Heart left ventricle (tissue), 16 donors: ENCODE measurements at regions of chr22 and their contacts with region 1.

Region 1: GRCh38 chr22:17562906-17563870 is at the start of gene SLC25A18:
- DNase-seq: peak; percentile 55 to 84 (median 78)
- ATAC-seq: peak; percentile 86 to 92 (median 90)
- H3K4me3 ChIP-seq: peak within 1 kb of the TSS in 6 of 12 donors; percentile 9 to 38 (median 28)
- H3K27ac ChIP-seq: peak within 1 kb of the TSS; percentile 66 to 94 (median 87)
- H3K4me1 ChIP-seq: peaks cover 4 to 33% (median 24%) of the 10 kb centered on the region in 12 donors
- H3K27me3 ChIP-seq: no peaks in the 10 kb centered on the region
- CTCF ChIP-seq: peak in 4 of 12 donors; percentile 10 to 18 (median 15)
- POLR2A ChIP-seq: peak in 1 of 2 donors; percentile 49
- total RNA-seq, gene SLC25A18: 0.27 to 10.2 (median 1.7) TPM

Region 2: DNA sequence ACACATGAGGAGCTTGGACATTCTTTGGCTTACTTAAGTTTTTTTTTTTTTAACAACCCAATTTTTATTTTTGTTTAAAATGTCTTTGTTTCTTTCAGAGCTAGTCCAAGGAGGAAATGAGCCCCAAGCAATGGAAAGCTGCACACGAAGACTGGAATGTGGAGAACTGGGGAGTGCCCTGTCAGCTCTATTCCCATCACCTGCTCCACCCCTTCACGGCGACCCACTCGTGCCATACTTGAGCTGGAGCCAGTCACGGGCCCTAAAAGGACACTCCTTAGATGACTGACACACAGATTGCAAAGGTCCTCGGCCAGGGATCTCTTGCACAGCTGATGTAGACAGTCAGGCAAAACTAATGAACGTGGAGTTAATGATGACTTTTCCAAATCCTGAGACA is 10.5 kb before region 1 on chr22:
- intact Hi-C with region 1: loop called in 1 of 10 experiments (anchors 1 kb)
- DNase-seq: peak in 2 of 5 donors; percentile 62 to 65
- ATAC-seq: peak in 3 of 4 donors; percentile 56 to 67 (median 65)
- H3K4me3 ChIP-seq: no peak overlapping the region
- H3K27ac ChIP-seq: peak overlapping the region in 2 of 12 donors; percentile 7 to 28
- H3K4me1 ChIP-seq: peaks cover 0 to 5% (median 0%) of the 10 kb centered on the region in 12 donors
- H3K27me3 ChIP-seq: no peaks in the 10 kb centered on the region
- CTCF ChIP-seq: no peak
- POLR2A ChIP-seq: no peak

Region 3: DNA sequence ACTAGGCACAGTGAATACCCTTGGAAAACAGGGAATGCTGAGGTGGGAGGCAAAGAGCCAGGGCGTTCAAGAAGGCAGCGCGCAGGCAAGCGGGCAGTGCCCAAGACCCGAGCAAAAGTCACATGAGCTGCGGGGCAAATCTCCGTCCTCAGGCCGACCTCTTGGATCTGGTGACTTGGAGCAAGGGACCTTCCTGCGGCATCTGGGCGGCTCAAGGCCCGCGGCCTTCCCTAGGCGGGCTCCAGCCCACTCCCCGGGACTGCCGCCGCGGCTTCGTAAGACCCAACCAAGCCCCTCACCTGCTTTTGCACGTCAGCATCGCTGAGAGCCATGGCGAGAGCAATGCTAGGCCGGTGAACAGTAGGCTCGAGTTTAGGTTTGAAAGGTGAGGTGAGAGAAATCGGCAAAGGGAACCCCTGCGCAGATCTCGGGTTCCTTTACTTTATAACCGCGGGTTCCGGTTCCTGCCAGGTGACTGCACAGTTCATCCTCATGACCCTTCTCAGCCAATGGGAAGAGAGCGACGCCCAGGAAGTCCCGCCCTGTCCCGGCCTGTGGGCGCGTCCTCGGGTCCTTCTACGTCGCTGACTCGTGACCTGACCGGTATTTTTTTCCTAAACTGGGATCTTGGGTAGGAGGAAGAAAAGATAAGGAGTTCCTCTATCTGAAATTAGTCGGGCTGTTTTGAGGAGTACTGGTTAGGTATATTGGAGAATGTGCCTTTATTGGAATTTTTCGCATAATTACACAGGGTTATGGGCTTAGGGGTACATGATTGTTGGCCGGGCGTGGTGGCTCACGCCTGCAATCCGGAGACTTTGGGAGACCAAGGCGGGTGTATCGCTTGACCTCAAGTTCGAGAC is 65.3 kb after region 1 on chr22 and contains the start of gene ATP6V1E1:
- intact Hi-C with region 1: loop called in 2 of 10 experiments (anchors 10 kb)
- DNase-seq: peak; percentile 96 to 97 (median 97)
- ATAC-seq: peak; percentile 100
- H3K4me3 ChIP-seq: peak within 1 kb of the TSS; percentile 79 to 100 (median 93)
- H3K27ac ChIP-seq: peak within 1 kb of the TSS; percentile 77 to 96 (median 92)
- H3K4me1 ChIP-seq: peaks cover 0 to 39% (median 21%) of the 10 kb centered on the region in 12 donors
- H3K27me3 ChIP-seq: no peaks in the 10 kb centered on the region
- CTCF ChIP-seq: no peak
- POLR2A ChIP-seq: peak in 1 of 2 donors; percentile 74
- total RNA-seq, gene ATP6V1E1: 188 to 293 (median 222) TPM

Region 4: DNA sequence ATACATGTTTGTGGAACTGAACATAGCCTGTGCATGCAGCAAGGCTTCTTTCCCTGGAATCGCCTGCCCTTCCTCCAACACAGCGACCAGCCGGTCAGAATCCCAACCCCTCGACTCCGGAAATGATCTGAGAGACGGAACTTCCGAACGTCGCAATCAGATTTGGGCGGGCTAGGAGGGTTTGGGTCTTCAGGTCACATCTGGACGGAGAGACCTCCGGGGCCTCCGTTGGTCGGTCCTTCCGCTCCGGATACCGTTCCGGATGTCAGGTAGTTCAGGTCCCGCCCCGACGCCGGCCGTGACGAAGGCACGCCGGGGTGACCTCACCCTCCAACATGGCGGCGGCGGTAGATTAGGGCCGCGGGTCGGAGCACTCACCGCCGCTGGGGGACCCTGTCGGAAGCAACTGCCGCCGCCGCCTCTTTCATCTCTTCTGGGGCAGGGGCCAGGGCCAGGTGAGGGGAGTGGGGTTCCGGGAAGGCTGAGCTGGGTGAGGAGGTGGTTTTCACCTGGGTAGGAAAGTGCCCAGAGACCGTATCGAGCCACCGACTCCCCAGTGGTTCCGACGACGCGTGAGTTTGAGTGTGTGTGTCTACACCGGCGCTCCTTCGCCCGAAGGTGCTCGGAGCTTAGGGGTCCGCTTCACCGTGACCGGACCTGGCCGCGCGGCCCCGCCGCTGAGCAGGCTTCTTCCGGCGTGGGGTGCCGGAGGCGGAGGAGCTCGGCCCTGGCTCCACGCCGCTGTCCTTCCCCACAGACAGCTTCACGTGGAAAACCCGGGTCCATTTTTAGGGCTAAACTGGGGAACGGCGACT is 75.5 kb after region 1 on chr22 and contains the start of gene BCL2L13:
- intact Hi-C with region 1: loop called in 3 of 10 experiments (anchors 2 to 10 kb)
- DNase-seq: peak; percentile 92 to 96 (median 95)
- ATAC-seq: peak; percentile 95 to 98 (median 98)
- H3K4me3 ChIP-seq: peak within 1 kb of the TSS; percentile 66 to 97 (median 84)
- H3K27ac ChIP-seq: peak within 1 kb of the TSS; percentile 96 to 99 (median 98)
- H3K4me1 ChIP-seq: peaks cover 0 to 26% (median 15%) of the 10 kb centered on the region in 12 donors
- H3K27me3 ChIP-seq: no peaks in the 10 kb centered on the region
- CTCF ChIP-seq: peak in 3 of 12 donors; percentile 4 to 19 (median 10)
- POLR2A ChIP-seq: peak; percentile 93 to 95
- total RNA-seq, gene BCL2L13: 81.9 to 187 (median 89.7) TPM

Region 5: DNA sequence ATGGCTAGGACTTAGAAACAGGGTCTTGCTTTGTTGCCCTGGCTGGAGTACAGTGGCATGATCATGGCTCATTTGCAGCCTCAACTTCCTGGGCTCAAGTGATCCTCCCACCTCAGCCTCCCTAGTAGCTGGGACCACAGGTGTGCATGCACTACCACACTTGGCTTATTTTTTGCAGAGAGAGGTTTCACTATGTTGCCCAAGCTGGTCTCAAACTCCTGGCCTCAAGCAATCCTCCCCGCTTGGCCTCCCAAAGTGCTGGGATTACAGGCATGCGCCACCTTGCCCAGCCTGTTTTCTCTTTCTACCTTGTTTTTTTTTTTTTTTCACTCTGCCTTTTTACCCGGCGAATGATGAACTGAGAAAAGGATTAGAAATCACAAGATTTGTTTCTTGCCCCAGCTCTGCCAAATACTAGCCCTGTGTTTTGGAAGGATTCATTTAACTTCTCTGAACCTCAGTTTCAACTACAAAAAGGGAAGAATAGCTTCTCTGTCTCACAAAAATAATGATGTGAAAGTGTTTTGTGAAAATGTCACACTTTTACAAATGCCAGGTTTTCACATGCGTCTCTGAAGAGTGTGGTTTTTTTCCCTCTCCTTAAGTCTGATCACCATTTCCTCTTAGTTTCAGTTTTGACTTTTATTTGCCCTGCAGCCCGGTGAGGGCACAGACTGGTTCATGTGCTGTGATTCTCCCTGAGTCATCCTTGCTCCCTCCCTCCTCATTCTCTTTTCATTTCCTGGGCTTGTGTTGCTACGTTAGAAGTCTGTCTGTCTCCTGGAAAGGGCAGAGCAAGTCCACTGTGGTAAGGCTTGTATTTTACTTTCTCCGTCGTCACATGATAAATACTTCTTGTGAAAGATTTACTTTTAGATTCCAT is 143.1 kb after region 1 on chr22:
- intact Hi-C with region 1: loop called in 2 of 10 experiments (anchors 5 to 10 kb)
- DNase-seq: peak in 3 of 5 donors; percentile 24 to 38 (median 27)
- ATAC-seq: peak; percentile 83 to 96 (median 90)
- H3K4me3 ChIP-seq: peak overlapping the region in 11 of 12 donors; percentile 1 to 48 (median 34)
- H3K27ac ChIP-seq: peak overlapping the region in 11 of 12 donors; percentile 31 to 87 (median 74)
- H3K4me1 ChIP-seq: peaks cover 0 to 29% (median 6%) of the 10 kb centered on the region in 12 donors
- H3K27me3 ChIP-seq: no peaks in the 10 kb centered on the region
- CTCF ChIP-seq: no peak
- POLR2A ChIP-seq: peak in 1 of 2 donors; percentile 37

Region 6: DNA sequence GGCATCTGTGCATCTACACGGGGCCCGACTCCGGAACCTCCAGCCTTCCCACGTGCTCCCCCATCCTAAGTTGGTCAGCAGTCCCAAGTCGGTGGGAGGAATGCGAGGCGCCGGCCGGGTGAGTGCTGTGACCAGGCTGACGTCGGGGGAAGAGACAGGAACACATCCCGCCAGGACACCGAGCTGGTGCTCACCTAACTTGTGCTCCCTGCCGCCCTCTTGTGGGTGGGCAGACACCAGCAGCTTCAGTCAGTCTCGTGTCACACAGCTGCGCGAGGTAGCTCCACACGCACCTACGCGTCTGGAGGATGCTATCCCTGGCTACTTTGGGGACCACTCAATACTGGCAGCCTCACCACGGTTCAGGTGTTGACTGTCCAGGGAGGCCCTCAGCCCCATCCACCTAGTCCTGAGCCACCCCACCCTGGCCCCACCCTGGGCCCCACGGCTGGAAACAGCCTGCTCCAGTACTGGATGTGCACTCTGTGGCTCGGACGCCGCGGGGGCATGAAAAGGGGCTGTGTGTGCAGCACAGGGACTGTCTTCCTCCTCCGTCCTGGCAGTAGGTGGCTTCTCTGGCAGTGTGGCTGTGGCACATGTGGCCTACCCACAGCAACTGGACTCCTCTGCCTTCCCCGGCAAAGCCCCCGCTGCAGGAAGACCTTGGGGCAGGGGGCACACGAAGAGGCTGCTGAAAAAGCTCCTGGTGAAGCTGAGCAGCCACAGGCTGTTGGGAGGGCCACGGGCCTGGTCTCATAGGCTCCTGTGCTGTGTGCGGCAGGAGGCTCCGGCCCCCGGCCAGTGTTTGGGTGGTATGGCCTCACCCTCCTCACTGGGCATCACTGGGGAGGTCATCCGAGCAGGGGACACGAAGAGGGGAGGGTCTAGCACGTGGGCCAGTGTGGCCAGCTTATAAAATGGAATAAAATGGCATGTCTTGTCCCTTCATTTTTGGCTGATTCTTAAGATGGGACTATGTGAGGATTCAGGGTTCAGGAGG is 222.3 kb after region 1 on chr22:
- intact Hi-C with region 1: loop called in 2 of 10 experiments (anchors 5 to 10 kb)
- DNase-seq: peak in 4 of 5 donors; percentile 62 to 82 (median 70)
- ATAC-seq: peak in 3 of 4 donors; percentile 6 to 28 (median 18)
- H3K4me3 ChIP-seq: no peak overlapping the region
- H3K27ac ChIP-seq: peak overlapping the region; percentile 59 to 90 (median 84)
- H3K4me1 ChIP-seq: peaks cover 0 to 57% (median 29%) of the 10 kb centered on the region in 12 donors
- H3K27me3 ChIP-seq: no peaks in the 10 kb centered on the region
- CTCF ChIP-seq: peak; percentile 25 to 65 (median 48)
- POLR2A ChIP-seq: no peak